PC-3 (cell line): ENCODE measurements at regions of chr7 and their contacts with region 1.

Region 1: GRCh38 chr7:156064971-156065386 is 252.7 kb upstream of the SHH start:
- DNase-seq: peak; percentile 70
- ATAC-seq: peak; percentile 96
- H3K4me3 ChIP-seq: peak overlapping the region; percentile 49; the same call in 1 of the 2 replicates
- H3K27ac ChIP-seq: no peak overlapping the region
- H3K4me1 ChIP-seq: peaks cover 15% of the 10 kb centered on the region
- H3K27me3 ChIP-seq: no peaks in the 10 kb centered on the region
- CTCF ChIP-seq: no peak

Region 2: GRCh38 chr7:156039971-156040677 is 24.9 kb before region 1 on chr7:
- CTCF ChIA-PET with region 1: no interaction called
- POLR2A ChIA-PET with region 1: no interaction called
- intact Hi-C with region 1: loop called (anchors 1 kb)
- DNase-seq: no peak
- ATAC-seq: no peak
- H3K4me3 ChIP-seq: no peak overlapping the region
- H3K27ac ChIP-seq: no peak overlapping the region
- H3K4me1 ChIP-seq: peaks cover 21% of the 10 kb centered on the region
- H3K27me3 ChIP-seq: no peaks in the 10 kb centered on the region
- CTCF ChIP-seq: no peak